Lower leg skin (tissue), 4 donors: ENCODE measurements at regions of chr7 and their contacts with region 1.

Region 1: DNA sequence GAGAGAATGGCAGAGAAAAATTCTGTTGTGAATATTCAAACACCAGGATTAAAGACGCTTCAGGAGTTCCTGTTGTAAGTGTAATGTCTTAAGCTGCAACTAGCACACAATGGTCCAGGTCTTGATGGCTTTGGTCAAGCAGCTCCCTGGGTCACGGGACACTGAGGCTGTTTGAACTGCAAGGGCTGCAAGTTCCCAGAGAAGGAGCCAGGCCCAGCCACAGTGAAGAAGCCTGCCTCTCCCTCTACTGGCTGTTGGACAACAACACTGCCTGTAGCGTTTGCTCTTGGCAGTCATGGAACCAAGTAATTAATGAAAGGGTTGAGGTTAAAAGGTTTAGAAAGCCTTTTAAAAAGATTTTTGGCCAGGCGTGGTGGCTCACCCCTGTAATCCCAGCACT is 31.9 kb upstream of the GUSB start:
- DNase-seq: no peak
- H3K4me3 ChIP-seq: no peak overlapping the region
- CTCF ChIP-seq: no peak
- POLR2A ChIP-seq: no peak

Region 2: GRCh38 chr7:66033471-66034385 is 19.8 kb after region 1 on chr7:
- intact Hi-C with region 1: loop called (anchors 1 kb)
- DNase-seq: no peak
- H3K4me3 ChIP-seq: no peak overlapping the region
- CTCF ChIP-seq: no peak
- POLR2A ChIP-seq: no peak